Activated CD4-positive, alpha-beta memory T cell treated with anti-CD3 and anti-CD28 coated beads for 36 hours (primary cell): ENCODE measurements at regions of chr22 and their contacts with region 1.

Region 1: DNA sequence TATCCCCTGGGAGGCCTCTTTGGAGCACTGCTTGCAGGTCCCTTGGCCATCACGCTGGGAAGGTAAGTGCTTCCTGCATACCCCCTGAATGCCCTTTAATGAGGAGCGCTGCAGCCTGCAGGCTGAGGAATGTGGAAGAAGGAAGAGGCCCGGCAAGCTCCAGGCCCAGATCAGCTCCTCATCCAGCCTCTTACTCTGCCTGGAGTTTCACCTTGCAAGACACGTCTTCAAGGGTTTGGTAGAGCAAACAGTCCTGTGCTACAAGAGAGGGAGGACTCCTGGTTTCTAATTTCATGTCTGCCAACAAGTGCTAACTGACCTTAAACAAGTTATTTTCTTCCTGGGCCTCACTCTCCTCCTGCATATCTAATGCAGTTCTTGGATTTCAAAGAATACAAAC is 10.9 kb downstream of the SLC2A11 start:
- DNase-seq: no peak
- H3K4me3 Mint-ChIP-seq: no peak overlapping the region
- H3K27ac Mint-ChIP-seq: no peak overlapping the region
- H3K4me1 Mint-ChIP-seq: no peaks in the 10 kb centered on the region
- H3K27me3 Mint-ChIP-seq: no peaks in the 10 kb centered on the region

Region 2: GRCh38 chr22:23849009-23850006 is 19.3 kb before region 1 on chr22:
- CTCF ChIA-PET with region 1: interaction called, 19 read pairs
- POLR2A ChIA-PET with region 1: no interaction called
- intact Hi-C with region 1: no loop called
- DNase-seq: peak; percentile 91
- H3K4me3 Mint-ChIP-seq: no peak overlapping the region
- H3K27ac Mint-ChIP-seq: no peak overlapping the region
- H3K4me1 Mint-ChIP-seq: peaks cover 7% of the 10 kb centered on the region
- H3K27me3 Mint-ChIP-seq: peaks cover 2% of the 10 kb centered on the region